PC-9 (cell line): ENCODE measurements at regions of chr4 and their contacts with region 1.

Region 1: GRCh38 chr4:139940600-139940999 is 213.4 kb downstream of the MAML3 start:
- DNase-seq: no peak
- H3K4me3 ChIP-seq: no peak overlapping the region
- H3K27ac ChIP-seq: no peak overlapping the region
- H3K4me1 ChIP-seq: no peaks in the 10 kb centered on the region
- H3K27me3 ChIP-seq: no peaks in the 10 kb centered on the region
- CTCF ChIP-seq: no peak

Region 2: DNA sequence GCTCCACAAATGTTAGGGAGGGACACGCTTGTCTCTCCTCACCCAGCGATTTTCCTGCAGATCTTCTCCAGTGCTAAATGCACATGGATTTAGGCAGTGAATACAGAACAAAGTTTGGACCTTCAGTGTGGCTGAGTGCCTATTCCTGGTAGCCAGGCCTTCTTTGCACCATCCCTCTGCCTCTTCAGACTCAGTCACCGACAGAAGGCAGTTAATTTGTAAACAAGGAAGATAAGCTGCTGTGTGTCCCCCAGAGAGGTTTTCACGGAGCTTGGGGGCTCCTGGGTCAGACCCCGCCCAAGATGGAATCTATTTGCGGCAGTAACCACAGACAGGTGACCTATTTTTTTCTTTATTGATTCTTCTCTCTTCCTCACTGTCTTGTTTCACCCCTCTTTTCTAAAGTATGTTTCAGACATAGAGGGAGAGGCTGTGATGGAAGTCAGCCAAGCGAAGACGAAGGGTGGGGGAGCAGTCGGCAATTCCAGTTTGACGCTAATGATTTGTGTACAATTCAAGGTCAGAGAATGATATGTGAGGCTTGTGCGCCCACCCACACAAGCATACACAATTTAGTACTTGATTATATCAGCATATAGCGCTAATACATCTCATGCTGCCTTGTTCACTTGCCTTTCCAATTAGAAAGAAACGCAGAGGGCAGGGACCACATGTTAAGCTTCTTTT is 74.2 kb before region 1 on chr4:
- CTCF ChIA-PET with region 1: no interaction called
- POLR2A ChIA-PET with region 1: no interaction called
- intact Hi-C with region 1: no loop called
- DNase-seq: no peak
- H3K4me3 ChIP-seq: no peak overlapping the region
- H3K27ac ChIP-seq: no peak overlapping the region
- H3K4me1 ChIP-seq: no peaks in the 10 kb centered on the region; the same call in 1 of the 2 replicates
- H3K27me3 ChIP-seq: no peaks in the 10 kb centered on the region
- CTCF ChIP-seq: no peak

Region 3: DNA sequence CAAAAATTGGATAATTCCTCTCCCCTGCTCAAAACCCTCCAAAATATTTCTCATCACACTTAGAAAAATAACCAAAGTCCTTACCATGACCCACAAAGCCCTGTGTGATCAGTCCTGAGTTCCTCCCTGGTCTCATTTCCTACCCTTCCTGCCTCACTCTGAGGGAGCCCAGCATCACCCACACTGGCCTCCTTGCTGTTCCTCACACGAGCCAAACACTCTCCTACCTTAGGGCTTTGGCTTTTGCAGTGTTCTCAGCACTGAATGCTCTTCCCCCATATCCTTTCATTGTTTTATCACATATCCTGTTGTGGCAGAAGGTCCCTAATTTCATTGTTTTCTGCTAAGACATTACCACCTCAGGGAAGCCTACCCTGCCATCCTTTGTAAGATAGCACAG is 545.3 kb after region 1 on chr4:
- CTCF ChIA-PET with region 1: no interaction called
- POLR2A ChIA-PET with region 1: no interaction called
- intact Hi-C with region 1: no loop called
- DNase-seq: no peak
- H3K4me3 ChIP-seq: no peak overlapping the region
- H3K27ac ChIP-seq: no peak overlapping the region
- H3K4me1 ChIP-seq: no peaks in the 10 kb centered on the region
- H3K27me3 ChIP-seq: no peaks in the 10 kb centered on the region
- CTCF ChIP-seq: no peak

Region 4: GRCh38 chr4:140834839-140835495 is 894.4 kb after region 1 on chr4:
- CTCF ChIA-PET with region 1: no interaction called
- POLR2A ChIA-PET with region 1: interaction called, 16 read pairs
- intact Hi-C with region 1: no loop called
- DNase-seq: no peak
- H3K4me3 ChIP-seq: no peak overlapping the region
- H3K27ac ChIP-seq: no peak overlapping the region
- H3K4me1 ChIP-seq: no peaks in the 10 kb centered on the region
- H3K27me3 ChIP-seq: no peaks in the 10 kb centered on the region
- CTCF ChIP-seq: no peak